ENCODE measurements at regions of chr3 and their contacts with region 1.

Region 1: GRCh38 chr3:71305231-71306206 is 278.0 kb downstream of the FOXP1 start:
- DNase-seq: peak; percentile 13
- H3K4me3 Mint-ChIP-seq: peak overlapping the region; percentile 89
- H3K27ac Mint-ChIP-seq: peak overlapping the region; percentile 87
- H3K4me1 Mint-ChIP-seq: peaks cover 81% of the 10 kb centered on the region
- H3K27me3 Mint-ChIP-seq: no peaks in the 10 kb centered on the region

Region 2: DNA sequence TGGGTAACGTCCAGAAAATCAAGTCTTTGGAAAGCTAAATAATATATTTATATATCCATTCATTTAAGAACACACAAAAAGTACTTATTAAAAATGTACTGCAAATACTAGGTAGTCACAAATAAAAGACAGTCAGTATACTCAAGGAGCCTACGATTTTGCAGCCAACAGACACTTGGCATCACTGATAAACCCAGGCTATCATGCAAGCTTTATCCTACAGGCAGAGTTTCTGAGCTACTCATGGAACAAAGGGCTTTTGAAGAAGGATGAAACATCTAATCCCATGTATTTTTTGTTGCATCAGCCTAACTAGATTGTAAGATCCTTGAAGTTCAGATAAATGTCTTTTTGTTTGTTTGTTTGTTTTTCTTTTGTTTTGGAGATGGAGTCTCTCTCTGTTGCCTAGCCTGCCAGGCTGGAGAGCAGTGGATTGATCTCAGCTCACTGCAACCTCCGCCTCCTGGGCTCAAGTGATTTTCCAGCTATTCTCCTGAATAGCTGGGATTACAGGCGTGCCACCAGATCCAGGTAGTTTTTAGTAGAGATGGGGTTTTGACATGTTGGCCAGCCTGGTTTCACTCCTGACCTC is 673.7 kb before region 1 on chr3:
- intact Hi-C with region 1: no loop called
- DNase-seq: no peak
- H3K4me3 Mint-ChIP-seq: no peak overlapping the region
- H3K27ac Mint-ChIP-seq: no peak overlapping the region
- H3K4me1 Mint-ChIP-seq: no peaks in the 10 kb centered on the region
- H3K27me3 Mint-ChIP-seq: peaks cover 5% of the 10 kb centered on the region

Region 3: GRCh38 chr3:71006810-71007785 is 298.4 kb before region 1 on chr3:
- intact Hi-C with region 1: loop called (anchors 1 kb)
- DNase-seq: no peak
- H3K4me3 Mint-ChIP-seq: no peak overlapping the region
- H3K27ac Mint-ChIP-seq: no peak overlapping the region
- H3K4me1 Mint-ChIP-seq: peaks cover 59% of the 10 kb centered on the region
- H3K27me3 Mint-ChIP-seq: no peaks in the 10 kb centered on the region

Region 4: GRCh38 chr3:71130471-71131374 is 174.8 kb before region 1 on chr3:
- intact Hi-C with region 1: loop called (anchors 1 kb)
- DNase-seq: peak; percentile 66
- H3K4me3 Mint-ChIP-seq: peak overlapping the region; percentile 91
- H3K27ac Mint-ChIP-seq: peak overlapping the region; percentile 94
- H3K4me1 Mint-ChIP-seq: peaks cover 62% of the 10 kb centered on the region
- H3K27me3 Mint-ChIP-seq: no peaks in the 10 kb centered on the region

Region 5: DNA sequence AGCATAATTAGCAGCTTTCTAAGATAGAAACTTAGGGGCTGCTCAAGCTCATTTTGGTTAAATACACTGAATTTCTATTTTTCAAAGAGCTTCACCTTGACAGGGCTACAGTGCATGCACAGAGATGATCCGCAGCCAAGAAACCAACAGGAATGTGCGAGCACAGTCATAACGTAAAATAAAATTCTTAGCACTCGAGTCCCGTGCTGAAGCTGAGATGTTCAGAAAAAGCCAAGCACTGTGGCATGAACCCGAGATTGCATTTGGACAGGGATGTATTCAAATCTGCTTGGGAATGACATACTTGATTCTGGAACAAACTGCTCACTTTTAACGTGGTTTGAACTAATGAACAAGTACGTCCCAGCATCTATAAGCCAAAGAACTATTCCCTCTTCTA is 62.3 kb before region 1 on chr3:
- intact Hi-C with region 1: no loop called
- DNase-seq: no peak
- H3K4me3 Mint-ChIP-seq: no peak overlapping the region
- H3K27ac Mint-ChIP-seq: no peak overlapping the region
- H3K4me1 Mint-ChIP-seq: peaks cover 28% of the 10 kb centered on the region
- H3K27me3 Mint-ChIP-seq: no peaks in the 10 kb centered on the region

Region 6: GRCh38 chr3:71317749-71318457 is 12.4 kb after region 1 on chr3:
- intact Hi-C with region 1: no loop called
- DNase-seq: no peak
- H3K4me3 Mint-ChIP-seq: no peak overlapping the region
- H3K27ac Mint-ChIP-seq: no peak overlapping the region
- H3K4me1 Mint-ChIP-seq: peaks cover 10% of the 10 kb centered on the region
- H3K27me3 Mint-ChIP-seq: no peaks in the 10 kb centered on the region

Region 7: GRCh38 chr3:71360764-71361163 is 55.2 kb after region 1 on chr3:
- intact Hi-C with region 1: loop called (anchors 1 kb)
- DNase-seq: no peak
- H3K4me3 Mint-ChIP-seq: peak overlapping the region; percentile 52
- H3K27ac Mint-ChIP-seq: peak overlapping the region; percentile 96
- H3K4me1 Mint-ChIP-seq: peaks cover 79% of the 10 kb centered on the region
- H3K27me3 Mint-ChIP-seq: no peaks in the 10 kb centered on the region

Region 8: DNA sequence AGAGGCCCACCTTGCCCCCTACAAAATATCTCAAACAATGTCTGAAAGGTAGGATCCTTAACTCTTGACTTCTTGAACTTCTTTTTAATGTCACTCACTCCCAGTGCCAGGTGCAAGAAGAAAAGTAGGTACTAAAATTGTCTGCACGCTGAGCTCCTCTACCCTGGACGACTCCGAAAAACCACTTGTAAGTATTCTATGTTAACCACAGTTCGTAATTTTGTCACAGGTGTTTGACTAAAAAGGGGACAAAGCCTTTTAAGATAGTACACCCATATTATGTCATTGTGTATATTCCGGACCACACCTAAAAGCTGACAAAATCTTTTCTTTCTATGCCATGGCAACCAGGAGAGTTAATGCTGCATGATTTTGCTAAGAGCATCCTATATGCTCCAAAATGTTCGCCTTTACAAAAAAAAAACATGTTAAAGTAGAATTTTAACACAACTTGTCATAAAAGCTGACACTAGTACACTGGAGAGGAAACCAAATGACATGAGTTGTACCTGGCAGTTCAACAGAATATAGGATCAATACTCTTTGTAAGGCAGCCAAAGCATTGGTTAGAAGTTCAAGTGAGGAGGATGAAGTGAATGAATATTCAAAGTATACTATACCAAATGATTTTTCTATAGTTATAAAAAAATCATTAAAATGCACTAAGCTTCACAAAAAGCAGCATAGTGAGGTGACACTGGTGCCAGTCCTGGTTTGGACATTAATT is 67.6 kb after region 1 on chr3:
- intact Hi-C with region 1: no loop called
- DNase-seq: no peak
- H3K4me3 Mint-ChIP-seq: no peak overlapping the region
- H3K27ac Mint-ChIP-seq: no peak overlapping the region
- H3K4me1 Mint-ChIP-seq: peaks cover 24% of the 10 kb centered on the region
- H3K27me3 Mint-ChIP-seq: peaks cover 4% of the 10 kb centered on the region

Region 9: DNA sequence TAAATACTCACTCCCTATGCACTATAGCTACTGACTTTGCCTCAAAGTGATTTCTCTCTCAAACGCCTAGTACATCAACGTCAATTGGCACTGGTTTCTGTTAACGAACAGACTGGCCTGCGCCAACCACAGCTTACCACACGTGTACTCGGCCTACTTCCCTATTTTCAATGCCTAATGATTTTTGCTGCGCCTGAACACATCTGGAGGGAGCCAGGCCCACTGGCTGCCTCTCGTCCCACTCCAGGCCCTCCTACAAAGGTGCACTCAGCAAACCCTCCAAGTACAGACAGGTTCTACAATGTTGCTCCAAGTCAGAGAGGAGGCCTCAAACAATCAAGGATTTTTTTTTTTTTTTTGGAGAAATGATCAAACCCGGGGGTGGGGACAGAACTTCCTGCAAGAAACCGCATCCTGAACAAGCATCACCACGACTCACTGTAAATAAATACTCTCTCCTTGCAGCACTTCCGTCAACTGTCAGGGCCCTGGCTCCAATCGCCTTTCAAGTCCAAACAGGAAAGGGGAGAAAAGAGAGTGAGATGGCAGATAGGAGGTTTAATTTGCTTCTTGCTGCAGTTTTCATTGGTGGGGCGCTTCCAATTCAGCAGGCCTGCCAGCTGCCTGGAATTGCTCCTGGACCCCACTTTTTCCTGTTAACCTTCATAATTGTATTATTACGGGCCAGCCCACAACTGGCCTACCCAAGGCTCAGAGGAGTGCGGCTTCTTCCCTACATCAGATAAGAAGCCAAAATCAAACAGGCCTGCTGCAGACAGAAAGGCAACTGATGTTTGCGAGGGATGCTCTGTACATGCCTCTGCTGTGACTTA is 138.7 kb after region 1 on chr3:
- intact Hi-C with region 1: loop called (anchors 2 kb)
- DNase-seq: peak; percentile 79
- H3K4me3 Mint-ChIP-seq: peak overlapping the region; percentile 71
- H3K27ac Mint-ChIP-seq: peak overlapping the region; percentile 99
- H3K4me1 Mint-ChIP-seq: peaks cover 86% of the 10 kb centered on the region
- H3K27me3 Mint-ChIP-seq: no peaks in the 10 kb centered on the region

Region 10: GRCh38 chr3:71512000-71512399 is 206.5 kb after region 1 on chr3:
- intact Hi-C with region 1: loop called (anchors 5 kb)
- DNase-seq: no peak
- H3K4me3 Mint-ChIP-seq: no peak overlapping the region
- H3K27ac Mint-ChIP-seq: no peak overlapping the region
- H3K4me1 Mint-ChIP-seq: peaks cover 14% of the 10 kb centered on the region
- H3K27me3 Mint-ChIP-seq: no peaks in the 10 kb centered on the region